Activated T-helper 1 cell treated with anti-CD3 and anti-CD28 coated beads, Interleukin-12 subunit alpha, Interleukin-12 subunit beta, Interleukin-2, Interleukin-4 antibody, amounts not matched to agents 30 ng/mL and 10 ng/mL and 1 ng/mL, durations not matched to agents 14 hours and 24 hours and 36 hours (primary cell): ENCODE measurements at regions of chr13 and their contacts with region 1.

Region 1: GRCh38 chr13:44484562-44485138 is 91.5 kb downstream of the TSC22D1 start:
- DNase-seq: no peak
- H3K4me3 Mint-ChIP-seq: peak overlapping the region; percentile 24
- H3K27ac Mint-ChIP-seq: no peak overlapping the region
- H3K4me1 Mint-ChIP-seq: peaks cover 17% of the 10 kb centered on the region
- H3K27me3 Mint-ChIP-seq: peaks cover 7% of the 10 kb centered on the region

Region 2: GRCh38 chr13:43470610-43471009 is 1014.0 kb before region 1 on chr13:
- intact Hi-C with region 1: no loop called
- DNase-seq: no peak
- H3K4me3 Mint-ChIP-seq: no peak overlapping the region
- H3K27ac Mint-ChIP-seq: no peak overlapping the region
- H3K4me1 Mint-ChIP-seq: no peaks in the 10 kb centered on the region
- H3K27me3 Mint-ChIP-seq: peaks cover 8% of the 10 kb centered on the region

Region 3: GRCh38 chr13:44648392-44649103 is 163.9 kb after region 1 on chr13:
- intact Hi-C with region 1: loop called (anchors 2 kb)
- DNase-seq: no peak
- H3K4me3 Mint-ChIP-seq: no peak overlapping the region
- H3K27ac Mint-ChIP-seq: peak overlapping the region; percentile 37
- H3K4me1 Mint-ChIP-seq: peaks cover 21% of the 10 kb centered on the region
- H3K27me3 Mint-ChIP-seq: peaks cover 9% of the 10 kb centered on the region

Region 4: DNA sequence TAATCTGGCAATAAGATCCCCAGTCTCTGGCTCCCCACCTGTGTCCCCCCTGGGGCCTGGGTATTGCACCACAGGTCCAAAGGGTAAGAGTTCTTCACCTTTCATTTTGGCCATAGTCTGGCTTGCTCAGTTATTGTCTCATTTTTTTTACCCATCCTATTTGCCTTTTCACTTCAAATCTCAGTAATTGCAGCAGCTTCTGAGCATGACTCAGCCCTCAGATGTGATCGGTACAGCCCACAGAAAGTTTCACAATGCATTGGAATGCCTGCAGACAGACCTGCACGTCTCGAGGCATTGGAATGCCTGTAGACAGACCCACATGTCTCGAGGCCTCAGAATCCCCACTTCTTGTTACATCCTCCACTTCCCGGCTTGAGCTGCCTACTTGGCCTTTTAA is 331.0 kb after region 1 on chr13:
- intact Hi-C with region 1: loop called (anchors 1 kb)
- DNase-seq: peak; percentile 10
- H3K4me3 Mint-ChIP-seq: no peak overlapping the region
- H3K27ac Mint-ChIP-seq: peak overlapping the region; percentile 8
- H3K4me1 Mint-ChIP-seq: peaks cover 29% of the 10 kb centered on the region
- H3K27me3 Mint-ChIP-seq: peaks cover 12% of the 10 kb centered on the region

Region 5: GRCh38 chr13:44969551-44970484 is 485.2 kb after region 1 on chr13:
- intact Hi-C with region 1: loop called (anchors 1 kb)
- DNase-seq: no peak
- H3K4me3 Mint-ChIP-seq: no peak overlapping the region
- H3K27ac Mint-ChIP-seq: no peak overlapping the region
- H3K4me1 Mint-ChIP-seq: no peaks in the 10 kb centered on the region
- H3K27me3 Mint-ChIP-seq: no peaks in the 10 kb centered on the region

Region 6: DNA sequence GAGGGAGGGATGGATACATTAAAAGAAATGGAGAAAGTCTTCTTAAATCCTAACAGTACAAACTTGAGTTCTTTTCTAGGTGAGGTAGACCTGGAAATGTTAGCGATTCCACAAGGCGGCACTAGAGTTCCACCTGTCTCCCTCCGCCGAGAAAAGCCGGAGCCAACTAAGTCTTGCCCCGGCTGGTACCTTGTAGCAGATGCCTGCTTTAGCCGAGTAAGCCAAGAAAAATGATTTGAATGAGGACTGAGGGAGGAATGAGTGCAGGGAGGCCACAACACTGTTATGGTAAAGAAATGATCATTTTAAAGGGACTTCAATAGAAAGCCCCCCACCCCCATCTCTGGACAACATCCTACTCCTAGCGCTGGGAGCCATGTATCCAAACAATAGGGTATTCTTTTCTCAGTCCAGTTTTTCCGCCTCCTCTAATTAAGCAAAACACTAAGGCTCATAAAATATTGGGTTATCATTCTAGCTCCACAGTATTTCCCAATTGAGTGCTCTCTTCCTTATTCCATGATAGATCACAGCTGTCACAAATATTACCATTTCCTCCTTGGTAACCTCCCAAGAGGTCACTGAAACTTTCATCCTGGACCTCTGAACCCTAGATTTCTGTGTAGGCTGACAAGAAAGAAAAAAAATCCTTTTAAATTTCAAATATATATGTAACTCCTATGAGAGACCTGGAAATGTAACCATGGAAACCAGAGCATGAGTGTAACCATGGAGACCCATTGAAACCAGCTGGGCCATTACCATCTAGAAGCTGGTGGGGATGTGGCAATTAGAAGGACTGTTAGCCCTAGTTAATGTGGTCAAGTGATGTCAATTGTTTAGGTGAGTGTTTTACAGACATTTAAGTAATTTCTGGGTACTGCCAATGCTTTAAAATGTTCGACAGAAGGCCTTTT is 563.0 kb after region 1 on chr13:
- intact Hi-C with region 1: loop called (anchors 1 kb)
- DNase-seq: peak; percentile 61
- H3K4me3 Mint-ChIP-seq: peak overlapping the region; percentile 76
- H3K27ac Mint-ChIP-seq: no peak overlapping the region
- H3K4me1 Mint-ChIP-seq: peaks cover 16% of the 10 kb centered on the region
- H3K27me3 Mint-ChIP-seq: peaks cover 33% of the 10 kb centered on the region

Region 7: DNA sequence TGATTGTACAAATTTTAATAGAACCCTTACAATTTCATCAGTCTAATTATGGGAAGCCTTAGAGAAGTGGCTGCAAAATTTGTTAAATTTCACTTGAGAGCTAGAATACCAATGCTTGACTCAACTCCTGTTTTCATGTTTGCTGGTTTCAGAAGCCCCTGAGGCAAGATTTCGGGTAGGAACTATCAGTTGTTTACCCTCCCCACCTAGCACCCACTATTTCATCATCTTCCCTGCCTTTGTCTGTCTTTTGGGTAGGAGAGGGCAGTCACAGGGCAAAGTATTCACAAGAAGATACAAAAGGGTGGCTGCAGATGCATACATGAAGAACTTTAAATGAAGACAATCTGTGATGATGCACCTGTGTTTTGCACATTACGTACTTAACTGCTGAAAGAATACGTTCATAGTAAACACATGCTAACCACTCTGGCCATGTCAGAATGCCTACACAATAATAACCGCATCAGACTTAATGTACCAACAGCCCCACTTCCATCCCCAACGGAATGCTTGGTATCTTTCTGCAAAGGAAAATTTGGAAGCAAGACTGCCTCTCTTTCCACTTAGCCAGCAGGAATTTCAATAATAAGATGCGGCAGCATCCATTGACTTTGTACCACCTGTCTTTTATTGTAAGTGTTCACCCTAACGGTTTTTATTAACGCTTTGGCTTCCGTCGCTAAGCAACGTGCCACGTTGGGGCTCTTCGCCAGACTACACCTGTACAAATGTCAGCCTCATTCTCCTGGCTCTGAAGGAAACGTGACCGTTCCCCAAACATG is 825.9 kb after region 1 on chr13:
- intact Hi-C with region 1: loop called (anchors 2 kb)
- DNase-seq: no peak
- H3K4me3 Mint-ChIP-seq: peak overlapping the region; percentile 78
- H3K27ac Mint-ChIP-seq: peak overlapping the region; percentile 44
- H3K4me1 Mint-ChIP-seq: peaks cover 18% of the 10 kb centered on the region
- H3K27me3 Mint-ChIP-seq: peaks cover 16% of the 10 kb centered on the region